K562 (cell line): ENCODE measurements at regions of chr14 and their contacts with region 1.

Region 1: GRCh38 chr14:36604757-36605505 is 22.5 kb upstream of the NKX2-8 start:
- DNase-seq: peak; percentile 41 to 73 (median 56)
- ATAC-seq: peak; percentile 83
- H3K4me3 ChIP-seq: no peak overlapping the region
- H3K27ac ChIP-seq: no peak overlapping the region
- H3K4me1 ChIP-seq: no peaks in the 10 kb centered on the region
- H3K27me3 ChIP-seq: no peaks in the 10 kb centered on the region; a peak in 2 of 5 replicates
- CTCF ChIP-seq: peak; percentile 63 to 81 (median 67); a peak in 5 of 6 replicates
- EP300 ChIP-seq: no peak
- POLR2A ChIP-seq: no peak
- RAD21 ChIP-seq: peak; percentile 55 to 68

Region 2: GRCh38 chr14:35883677-35884293 is 721.1 kb before region 1 on chr14:
- CTCF ChIA-PET with region 1: no interaction called
- POLR2A ChIA-PET with region 1: no interaction called
- in situ Hi-C with region 1: no loop called
- intact Hi-C with region 1: loop called (anchors 10 kb)
- DNase-seq: peak in 2 of 4 experiments; percentile 6 to 34
- ATAC-seq: peak; percentile 67; the same call in 2 of the 3 replicates
- H3K4me3 ChIP-seq: no peak overlapping the region
- H3K27ac ChIP-seq: no peak overlapping the region
- H3K4me1 ChIP-seq: peaks cover 0 to 4% of the 10 kb centered on the region in 2 experiments; a peak in 2 of 5 replicates
- H3K27me3 ChIP-seq: no peaks in the 10 kb centered on the region
- CTCF ChIP-seq: peak; percentile 57 to 68 (median 60)
- EP300 ChIP-seq: no peak
- POLR2A ChIP-seq: no peak
- RAD21 ChIP-seq: peak; percentile 17 to 53; a peak in 3 of 4 replicates

Region 3: DNA sequence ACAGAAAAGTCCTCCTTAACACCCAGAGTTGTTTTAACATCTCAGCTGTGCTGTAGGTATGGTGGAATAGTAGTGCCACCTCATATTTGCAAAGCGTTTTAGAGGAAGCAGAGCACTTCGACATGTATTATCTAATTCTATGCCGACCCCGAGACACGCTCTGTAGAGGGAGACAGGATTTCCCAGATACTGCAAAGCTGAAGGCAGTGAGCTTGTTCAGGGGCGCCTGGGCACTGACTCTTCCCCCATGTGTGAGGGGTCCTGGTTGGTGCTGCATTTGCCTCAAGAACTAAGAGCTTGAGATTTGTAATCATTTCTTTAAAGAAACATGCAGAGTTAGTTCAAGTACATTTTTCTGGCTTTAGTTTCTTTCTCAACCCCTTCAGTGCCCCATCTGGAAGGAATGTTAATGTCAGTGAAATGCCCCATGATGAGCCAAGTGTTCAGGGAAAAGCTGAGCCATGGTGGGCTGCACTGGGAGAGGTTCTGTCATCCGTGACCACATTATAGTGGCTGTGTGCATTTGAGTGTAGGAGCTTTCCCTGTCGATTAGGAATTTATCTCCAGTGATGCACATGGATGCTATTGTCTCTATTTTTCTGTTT is 350.8 kb before region 1 on chr14:
- CTCF ChIA-PET with region 1: no interaction called
- POLR2A ChIA-PET with region 1: no interaction called
- in situ Hi-C with region 1: no loop called
- intact Hi-C with region 1: no loop called
- DNase-seq: no peak
- ATAC-seq: peak; percentile 65
- H3K4me3 ChIP-seq: no peak overlapping the region
- H3K27ac ChIP-seq: no peak overlapping the region
- H3K4me1 ChIP-seq: no peaks in the 10 kb centered on the region
- H3K27me3 ChIP-seq: no peaks in the 10 kb centered on the region
- CTCF ChIP-seq: no peak
- EP300 ChIP-seq: no peak
- POLR2A ChIP-seq: no peak
- RAD21 ChIP-seq: no peak

Region 4: DNA sequence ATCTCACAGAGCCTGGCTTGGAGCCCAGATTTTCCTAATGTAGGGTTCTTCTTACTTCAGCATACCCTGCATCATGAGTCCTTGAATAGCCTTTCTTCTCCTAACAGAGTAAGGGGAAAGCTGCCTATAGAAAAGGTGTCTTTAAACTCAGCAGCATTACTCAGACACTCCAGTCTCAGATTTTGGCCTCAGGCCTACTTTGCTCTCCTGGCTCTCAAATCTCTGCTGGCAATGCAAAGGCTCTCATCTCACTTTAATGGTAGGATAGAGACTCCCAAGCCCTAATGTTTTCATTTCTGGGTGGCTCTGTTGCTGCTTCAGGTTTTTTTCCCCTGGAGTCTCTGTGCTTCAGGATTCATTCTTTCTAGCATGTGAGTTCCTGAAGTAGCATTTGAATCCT is 13.4 kb before region 1 on chr14:
- CTCF ChIA-PET with region 1: no interaction called
- POLR2A ChIA-PET with region 1: no interaction called
- in situ Hi-C with region 1: no loop called
- intact Hi-C with region 1: no loop called
- DNase-seq: no peak
- ATAC-seq: no peak
- H3K4me3 ChIP-seq: no peak overlapping the region
- H3K27ac ChIP-seq: no peak overlapping the region
- H3K4me1 ChIP-seq: no peaks in the 10 kb centered on the region
- H3K27me3 ChIP-seq: peaks cover 0 to 2% of the 10 kb centered on the region in 2 experiments; a peak in 2 of 5 replicates
- CTCF ChIP-seq: no peak
- EP300 ChIP-seq: no peak
- POLR2A ChIP-seq: no peak
- RAD21 ChIP-seq: no peak